ENCODE measurements at regions of chr17 and their contacts with region 1.

Region 1: DNA sequence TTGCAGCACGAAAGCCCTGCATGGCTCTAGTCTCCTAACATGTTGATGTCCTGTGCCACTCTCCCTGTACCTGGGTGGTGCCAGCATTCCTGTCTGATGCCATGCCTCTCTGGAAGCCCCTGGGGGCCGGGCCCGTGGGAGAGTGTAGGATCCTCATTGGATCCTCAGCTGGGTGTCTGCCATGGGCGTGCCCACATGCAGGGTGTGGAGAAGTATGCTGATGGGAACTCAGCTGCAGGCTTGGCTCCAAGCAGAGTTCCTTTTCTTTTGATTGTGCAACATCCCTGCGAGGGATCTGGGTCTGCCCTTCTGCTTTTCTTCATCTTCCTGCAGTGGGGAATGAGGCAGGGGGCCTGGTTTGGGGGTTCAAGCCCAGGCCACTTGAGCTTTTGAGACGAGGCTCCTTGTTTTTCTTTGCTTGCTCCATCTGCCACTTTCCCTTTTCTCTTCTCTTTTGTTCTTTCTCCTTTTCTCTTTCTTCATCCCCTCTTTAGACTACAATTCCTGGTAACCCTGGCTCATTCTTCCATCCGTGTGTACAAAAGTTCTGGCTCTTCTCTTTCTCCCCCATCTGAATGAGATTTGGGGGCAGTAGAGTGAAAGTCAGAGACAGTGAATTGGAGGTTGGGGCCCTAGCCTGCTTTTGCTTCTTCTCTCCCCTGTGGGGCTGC is 32.9 kb downstream of the KSR1 start:
- DNase-seq: peak; percentile 50 to 71
- H3K4me3 ChIP-seq: no peak overlapping the region
- H3K27ac ChIP-seq: peak overlapping the region in 3 of 5 donors; percentile 37 to 67 (median 40)
- H3K4me1 ChIP-seq: peaks cover 31 to 63% (median 42%) of the 10 kb centered on the region in 4 donors
- H3K27me3 ChIP-seq: no peaks in the 10 kb centered on the region
- CTCF ChIP-seq: no peak
- EP300 ChIP-seq: no peak
- POLR2A ChIP-seq: no peak

Region 2: DNA sequence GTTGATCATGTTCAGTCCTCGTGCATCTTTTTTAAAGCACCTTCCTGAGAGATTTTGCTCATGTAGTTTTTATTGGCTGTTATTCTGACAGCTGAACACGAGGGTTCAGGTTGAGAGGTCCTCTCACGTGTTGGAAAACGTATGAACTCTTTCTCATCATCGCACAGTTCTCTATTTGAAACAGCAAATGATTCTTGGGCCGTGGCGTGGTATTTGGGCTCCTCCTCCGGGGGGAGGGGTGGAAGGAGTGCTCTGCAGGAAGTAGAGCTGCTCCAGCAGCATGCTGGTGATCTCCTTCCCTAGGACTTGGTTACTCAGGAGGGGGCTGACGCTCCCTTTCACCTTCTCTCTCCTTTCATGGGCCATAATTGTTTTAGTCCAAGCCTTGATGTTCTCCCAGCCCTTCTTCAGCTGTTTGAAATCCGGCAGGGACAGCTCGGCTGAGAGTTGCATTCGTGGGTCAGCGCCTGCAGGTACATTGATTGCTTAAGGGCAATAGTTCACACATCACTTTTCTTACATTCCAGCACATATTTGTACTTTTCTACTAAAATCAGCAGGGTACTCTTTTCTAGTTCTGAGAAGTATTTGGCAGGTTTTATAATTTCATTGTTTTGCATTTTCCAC is 37.5 kb after region 1 on chr17:
- intact Hi-C with region 1: no loop called
- DNase-seq: peak; percentile 49 to 83
- H3K4me3 ChIP-seq: no peak overlapping the region
- H3K27ac ChIP-seq: no peak overlapping the region
- H3K4me1 ChIP-seq: peaks cover 28 to 67% (median 43%) of the 10 kb centered on the region in 4 donors
- H3K27me3 ChIP-seq: no peaks in the 10 kb centered on the region
- CTCF ChIP-seq: no peak
- EP300 ChIP-seq: no peak
- POLR2A ChIP-seq: no peak

Region 3: DNA sequence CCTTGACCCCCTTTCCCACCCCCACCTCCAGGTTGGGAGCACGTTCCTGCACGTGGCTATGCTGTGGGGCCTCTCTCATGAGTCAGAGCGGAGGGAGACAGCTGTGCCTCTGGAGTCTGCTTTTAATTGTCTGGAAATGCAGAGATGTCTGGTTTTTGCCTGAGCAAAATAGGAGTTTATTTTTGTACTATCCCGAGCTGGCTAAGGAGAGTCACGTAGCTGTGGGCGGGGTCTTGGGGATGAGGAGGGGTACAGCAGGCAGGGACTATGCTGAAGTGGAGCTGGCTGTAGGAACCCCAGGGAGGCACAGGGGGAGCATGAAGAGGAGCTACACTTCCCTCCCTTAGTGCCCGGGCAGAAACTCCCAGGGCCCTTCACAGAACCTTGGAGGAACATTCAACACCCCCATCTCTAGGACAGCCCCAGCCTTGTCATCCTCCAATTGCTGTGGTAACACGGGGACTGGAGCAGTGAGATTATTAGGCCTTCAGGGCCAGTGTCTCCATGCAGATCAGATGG is 97.1 kb after region 1 on chr17:
- intact Hi-C with region 1: loop called (anchors 10 kb)
- DNase-seq: no peak
- H3K4me3 ChIP-seq: no peak overlapping the region
- H3K27ac ChIP-seq: no peak overlapping the region
- H3K4me1 ChIP-seq: peaks cover 0 to 4% (median 0%) of the 10 kb centered on the region in 4 donors
- H3K27me3 ChIP-seq: no peaks in the 10 kb centered on the region
- CTCF ChIP-seq: no peak
- EP300 ChIP-seq: no peak
- POLR2A ChIP-seq: no peak

Measured in stomach (tissue), 19 donors.